ENCODE measurements at regions of chr12 and their contacts with region 1.

Region 1: GRCh38 chr12:122190842-122191668 is 8.1 kb downstream of the LRRC43 start:
- DNase-seq: peak; percentile 42
- ATAC-seq: peak; percentile 92
- H3K4me3 Mint-ChIP-seq: no peak overlapping the region
- H3K27ac Mint-ChIP-seq: no peak overlapping the region
- H3K4me1 Mint-ChIP-seq: no peaks in the 10 kb centered on the region
- H3K27me3 Mint-ChIP-seq: no peaks in the 10 kb centered on the region
- CTCF ChIP-seq: no peak

Region 2: DNA sequence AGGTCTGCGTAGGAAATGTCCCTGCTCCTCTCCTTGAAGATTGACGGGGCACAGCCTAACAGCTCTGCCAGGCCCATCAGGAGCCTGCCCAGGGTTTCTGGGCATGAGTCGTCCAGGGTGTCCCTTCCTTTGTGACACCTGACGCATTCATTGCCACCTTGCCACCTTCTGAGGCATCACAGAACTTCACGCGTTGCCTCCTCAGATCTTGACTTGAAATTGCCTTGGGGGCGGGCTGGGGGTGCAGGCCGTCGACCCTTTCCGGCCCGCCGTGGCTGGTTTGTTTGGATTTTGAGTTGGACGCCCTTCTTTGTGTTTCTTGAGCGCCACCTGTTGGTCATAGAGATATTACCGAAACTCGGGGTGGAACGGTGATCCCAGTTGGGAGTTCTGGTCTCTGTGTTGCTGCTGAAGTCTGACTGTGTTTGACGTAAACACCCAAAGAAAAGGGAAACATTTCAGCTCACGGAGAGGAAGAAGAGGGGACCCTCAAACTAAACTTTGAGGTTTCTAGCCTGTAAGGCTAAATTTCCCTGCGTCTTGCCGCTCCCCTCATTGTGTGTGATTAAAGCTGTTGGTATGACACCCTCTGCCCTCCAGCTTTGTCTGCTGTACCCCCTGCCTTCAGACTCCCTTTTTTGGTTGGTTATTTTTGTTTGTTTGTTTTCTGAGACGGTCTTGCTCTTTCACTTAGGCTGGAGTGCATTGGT is 67.8 kb before region 1 on chr12:
- CTCF ChIA-PET with region 1: interaction called, 4 read pairs
- POLR2A ChIA-PET with region 1: no interaction called
- intact Hi-C with region 1: loop called (anchors 2 kb)
- DNase-seq: peak; percentile 50
- ATAC-seq: peak; percentile 62
- H3K4me3 Mint-ChIP-seq: no peak overlapping the region
- H3K27ac Mint-ChIP-seq: peak overlapping the region; percentile 38
- H3K4me1 Mint-ChIP-seq: peaks cover 23% of the 10 kb centered on the region
- H3K27me3 Mint-ChIP-seq: no peaks in the 10 kb centered on the region
- CTCF ChIP-seq: no peak